Gastrocnemius medialis (tissue), 4 donors: ENCODE measurements at regions of chr9 and their contacts with region 1.

Region 1: DNA sequence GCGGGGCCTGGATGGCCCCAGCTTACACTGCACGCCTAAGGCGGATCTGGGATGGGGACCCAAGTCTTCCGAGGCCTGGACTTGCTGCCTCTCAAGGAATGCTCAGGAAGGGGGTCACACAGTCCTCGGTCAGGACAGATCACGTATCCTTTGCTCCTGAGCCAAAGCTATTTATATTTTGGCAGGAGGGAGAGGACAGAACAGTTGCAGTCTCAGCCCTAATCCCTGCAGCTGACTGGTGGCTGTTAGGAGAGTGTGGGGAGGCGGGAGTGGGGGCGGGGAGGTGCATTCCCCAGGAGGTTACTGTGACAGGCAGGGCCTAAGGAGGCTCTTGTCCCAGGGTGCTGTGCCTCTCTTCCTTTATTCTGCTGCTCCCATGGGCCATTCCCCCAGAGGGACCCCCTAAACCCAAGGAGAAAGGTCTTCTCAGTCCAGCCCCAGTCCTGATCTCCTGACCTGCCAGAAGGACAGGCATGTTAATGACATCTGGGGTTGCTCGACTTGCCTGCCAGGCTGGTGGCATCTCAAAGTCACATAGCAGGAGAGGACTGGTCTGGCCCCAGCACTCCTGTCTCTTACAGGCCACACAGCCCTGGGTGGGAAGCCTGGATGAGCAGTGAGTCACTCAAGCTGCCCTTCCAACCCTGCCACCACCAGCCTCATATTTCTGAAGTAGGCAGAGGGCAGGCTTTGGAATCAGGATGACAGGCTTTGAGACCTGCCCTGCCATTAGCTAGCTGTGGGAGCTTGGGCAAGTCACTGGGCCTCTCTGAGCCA is 51.9 kb downstream of the COL27A1 start:
- DNase-seq: peak; percentile 89 to 95
- ATAC-seq: peak; percentile 87 to 91
- H3K4me3 ChIP-seq: no peak overlapping the region
- H3K27ac ChIP-seq: peak overlapping the region; percentile 87 to 95 (median 93)
- H3K4me1 ChIP-seq: peaks cover 38 to 53% of the 10 kb centered on the region in 2 donors
- H3K27me3 ChIP-seq: no peaks in the 10 kb centered on the region
- CTCF ChIP-seq: no peak
- POLR2A ChIP-seq: peak in 1 of 2 donors; percentile 14

Region 2: GRCh38 chr9:114174876-114175771 is 32.1 kb before region 1 on chr9:
- in situ Hi-C with region 1: no loop called
- intact Hi-C with region 1: loop called (anchors 1 kb)
- DNase-seq: peak in 1 of 2 donors; percentile 45
- ATAC-seq: peak; percentile 26 to 28
- H3K4me3 ChIP-seq: no peak overlapping the region
- H3K27ac ChIP-seq: peak overlapping the region; percentile 27 to 75 (median 58)
- H3K4me1 ChIP-seq: peaks cover 47 to 56% of the 10 kb centered on the region in 2 donors
- H3K27me3 ChIP-seq: no peaks in the 10 kb centered on the region
- CTCF ChIP-seq: no peak
- POLR2A ChIP-seq: no peak

Region 3: DNA sequence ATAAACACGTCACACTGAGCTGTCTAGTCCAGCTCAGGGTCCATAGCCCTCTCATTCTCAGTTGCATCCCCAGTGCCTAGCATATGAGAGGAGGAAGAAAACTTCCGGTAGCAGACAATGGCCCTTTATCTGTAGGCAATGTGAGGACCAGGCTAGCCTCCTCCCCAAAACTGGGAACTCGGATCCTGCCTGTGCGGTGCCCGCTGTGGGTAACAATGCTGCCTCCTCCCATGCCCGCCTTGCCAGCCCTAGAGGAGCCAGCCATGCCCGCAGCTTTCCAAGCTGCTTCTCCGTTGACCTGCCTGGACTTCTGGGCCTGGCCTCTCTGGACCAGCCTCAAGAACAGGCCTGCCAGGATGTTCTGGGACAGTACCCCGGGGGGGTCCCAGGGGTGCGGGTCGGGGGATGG is 41.1 kb after region 1 on chr9:
- in situ Hi-C with region 1: no loop called
- intact Hi-C with region 1: loop called (anchors 2 kb)
- DNase-seq: no peak
- ATAC-seq: no peak
- H3K4me3 ChIP-seq: no peak overlapping the region
- H3K27ac ChIP-seq: no peak overlapping the region
- H3K4me1 ChIP-seq: peaks cover 34 to 39% of the 10 kb centered on the region in 2 donors
- H3K27me3 ChIP-seq: no peaks in the 10 kb centered on the region
- CTCF ChIP-seq: no peak
- POLR2A ChIP-seq: no peak

Region 4: DNA sequence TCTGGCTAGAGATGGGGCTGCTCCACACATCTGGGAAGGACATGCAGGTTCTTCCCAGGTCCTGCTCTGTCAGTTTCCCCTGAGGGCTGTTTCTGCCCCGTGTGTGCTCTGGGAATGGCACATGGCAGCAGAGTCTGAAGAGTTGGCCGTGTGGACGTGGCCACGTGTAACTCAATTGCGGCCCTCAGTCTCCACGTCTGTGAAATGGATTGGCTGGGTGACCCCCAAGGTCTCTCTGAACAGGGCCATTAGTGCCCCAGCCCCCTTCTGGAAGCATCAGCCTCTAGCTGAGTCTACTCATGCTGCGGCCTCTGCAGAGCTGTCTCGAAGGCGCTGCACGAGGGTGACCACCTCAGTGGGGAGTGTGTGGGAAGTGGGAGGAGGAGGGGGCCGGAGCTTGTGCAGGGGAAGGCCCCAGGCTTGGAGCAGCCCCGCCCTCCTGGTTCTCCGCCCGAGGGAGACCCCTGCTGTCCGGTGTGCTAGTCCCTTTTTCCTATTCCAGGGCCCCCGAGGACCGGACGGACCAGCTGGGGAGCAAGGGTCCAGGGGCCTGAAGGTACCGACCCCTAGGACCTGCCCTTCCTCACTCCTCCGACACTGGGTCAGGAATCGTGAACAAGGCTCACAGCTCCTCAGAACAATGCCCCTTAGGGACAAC is 56.8 kb after region 1 on chr9:
- in situ Hi-C with region 1: no loop called
- intact Hi-C with region 1: loop called (anchors 5 kb)
- DNase-seq: no peak
- ATAC-seq: no peak
- H3K4me3 ChIP-seq: no peak overlapping the region
- H3K27ac ChIP-seq: no peak overlapping the region
- H3K4me1 ChIP-seq: no peaks in the 10 kb centered on the region
- H3K27me3 ChIP-seq: no peaks in the 10 kb centered on the region
- CTCF ChIP-seq: no peak
- POLR2A ChIP-seq: no peak